Posterior vena cava (tissue), 2 donors: ENCODE measurements at regions of chr9 and their contacts with region 1.

Region 1: DNA sequence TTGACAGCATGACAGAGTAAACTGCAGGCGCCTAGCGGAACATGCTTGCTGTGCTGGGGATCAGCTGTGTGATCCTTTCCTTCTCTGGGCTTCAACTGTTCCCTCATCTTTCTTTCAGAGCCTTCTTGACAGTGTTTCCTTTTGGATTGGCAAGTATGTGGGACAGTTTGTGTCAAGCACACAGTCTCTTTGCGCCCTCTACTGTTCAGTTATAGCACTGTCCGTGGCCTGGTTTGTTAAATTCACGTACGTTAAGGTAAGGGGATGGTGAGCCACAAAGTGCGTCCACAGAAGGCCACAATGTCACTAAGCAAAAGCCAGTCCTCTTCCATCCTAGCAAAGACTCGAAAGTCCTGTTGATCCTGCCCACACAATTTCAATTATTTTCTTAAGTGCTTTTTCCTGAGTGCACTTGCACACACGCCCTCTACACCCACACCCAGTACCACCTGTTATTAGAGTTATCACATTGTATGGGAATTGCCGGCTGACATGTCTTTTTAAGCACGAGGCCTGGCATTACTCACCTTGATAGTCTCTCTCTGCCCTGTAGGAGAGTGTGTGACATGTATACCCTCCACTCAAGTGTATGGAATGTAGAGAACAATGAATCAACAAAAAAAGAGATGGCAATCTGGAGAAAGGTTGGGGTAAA is 22.5 kb upstream of the PTPN3 start:
- DNase-seq: no peak

Region 2: DNA sequence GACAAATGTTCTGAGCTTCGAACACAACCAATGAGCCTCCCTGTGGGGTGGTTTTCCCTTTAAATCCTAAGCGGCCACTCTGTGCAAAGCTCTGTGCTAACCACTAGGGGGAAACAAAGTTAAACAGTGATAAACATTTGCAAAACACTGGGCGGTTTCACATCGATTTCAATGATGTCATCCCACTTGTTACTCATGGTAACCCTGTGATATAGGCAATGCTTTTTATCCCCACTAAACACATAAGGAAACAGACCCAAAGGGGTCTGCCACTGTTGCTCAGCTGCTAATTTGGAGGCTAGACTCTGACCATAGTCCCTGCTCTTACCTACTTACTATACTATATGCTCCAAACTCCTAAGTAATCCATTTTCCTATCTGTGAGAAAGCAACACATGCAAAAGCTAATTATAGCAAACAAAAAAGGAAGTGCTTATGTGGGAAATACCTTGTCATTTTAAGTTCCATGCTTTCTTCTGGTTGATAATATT is 79.8 kb before region 1 on chr9:
- intact Hi-C with region 1: loop called in 1 of 2 experiments (anchors 10 kb)
- DNase-seq: no peak